ENCODE measurements at regions of chr12 and their contacts with region 1.

Region 1: DNA sequence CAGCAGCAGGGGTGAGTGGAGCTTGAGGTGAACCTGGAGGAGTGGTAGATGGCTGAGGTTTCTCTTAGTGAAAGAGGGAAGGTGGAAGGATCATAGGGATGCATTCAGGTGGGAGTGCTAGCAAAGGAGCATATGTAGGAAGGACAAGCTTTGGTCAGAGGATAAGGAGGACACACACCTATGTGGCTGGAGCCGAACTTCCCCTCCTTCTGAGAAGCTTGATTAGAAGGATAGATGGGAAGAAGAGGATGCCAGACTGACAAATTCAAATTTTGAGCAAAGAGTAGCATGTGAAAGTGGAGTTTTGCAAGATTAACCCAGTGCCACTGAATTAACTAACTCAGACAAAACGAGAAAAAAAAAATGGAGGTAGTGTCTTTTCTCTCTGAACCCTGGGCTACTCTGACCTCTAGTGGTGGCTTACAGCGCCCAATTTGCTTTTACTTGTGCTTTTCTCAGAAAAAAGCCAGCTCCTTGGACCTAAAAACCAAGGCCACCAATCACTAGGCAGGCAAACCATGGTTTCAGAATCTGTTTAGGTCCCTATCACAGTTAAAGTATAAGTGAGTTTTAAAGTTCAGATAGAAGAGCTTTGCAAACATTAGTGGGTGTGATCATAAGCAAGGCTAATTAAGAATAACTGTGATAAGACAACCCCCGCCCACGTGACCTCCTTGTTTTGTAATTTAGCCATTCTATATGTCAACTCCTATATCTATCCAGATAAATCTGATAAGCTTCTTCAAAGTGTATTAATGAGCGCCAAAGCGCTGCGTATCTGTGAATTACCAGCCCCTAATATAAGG is 15.5 kb downstream of the EMP1 start:
- DNase-seq: peak; percentile 70
- H3K4me3 ChIP-seq: no peak overlapping the region
- H3K27ac ChIP-seq: peak overlapping the region; percentile 54
- H3K4me1 ChIP-seq: peaks cover 49% of the 10 kb centered on the region
- H3K27me3 ChIP-seq: no peaks in the 10 kb centered on the region
- CTCF ChIP-seq: peak; percentile 72 to 76
- POLR2A ChIP-seq: no peak

Region 2: GRCh38 chr12:12983420-12984035 is 228.5 kb before region 1 on chr12:
- CTCF ChIA-PET with region 1: interaction called, 159 read pairs
- POLR2A ChIA-PET with region 1: no interaction called
- dilution Hi-C with region 1: loop called (anchors 10 kb)
- intact Hi-C with region 1: no loop called
- DNase-seq: peak; percentile 78
- H3K4me3 ChIP-seq: no peak overlapping the region
- H3K27ac ChIP-seq: peak overlapping the region; percentile 25
- H3K4me1 ChIP-seq: peaks cover 20% of the 10 kb centered on the region
- H3K27me3 ChIP-seq: no peaks in the 10 kb centered on the region
- CTCF ChIP-seq: peak; percentile 56 to 60
- POLR2A ChIP-seq: no peak

Region 3: DNA sequence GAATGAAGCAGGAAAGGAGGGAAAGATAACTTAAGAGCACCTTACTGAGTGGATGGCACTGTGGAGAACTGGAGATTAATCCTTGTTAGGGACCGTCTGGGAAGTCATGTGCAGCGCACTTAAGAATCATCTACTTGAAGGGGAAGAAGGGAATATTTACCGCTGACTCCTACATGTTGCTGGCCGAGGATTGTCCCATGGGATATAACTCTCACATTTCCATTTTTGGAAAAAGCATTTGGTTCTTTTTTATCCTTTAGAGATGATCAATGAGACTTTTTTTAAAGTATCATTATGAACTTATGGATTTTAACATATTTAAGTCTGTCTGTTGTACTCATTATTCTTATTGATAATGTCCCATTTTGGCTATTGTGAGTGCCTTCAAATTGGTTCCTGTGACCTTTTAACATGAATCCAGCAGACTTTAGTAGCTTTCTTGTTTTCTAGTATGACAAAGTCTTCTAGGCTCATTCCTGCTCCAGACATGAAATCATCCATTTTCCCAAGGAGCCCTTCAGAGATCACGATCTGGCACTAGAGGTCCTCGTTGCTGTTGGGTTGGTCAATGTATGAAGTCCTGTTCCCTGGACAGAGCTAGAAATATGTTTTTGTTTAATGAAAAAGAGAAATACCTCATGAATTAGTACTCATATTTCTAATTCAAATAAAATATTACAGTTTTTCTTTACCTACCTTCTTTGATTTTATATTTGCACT is 188.1 kb before region 1 on chr12:
- CTCF ChIA-PET with region 1: interaction called, 5 read pairs
- POLR2A ChIA-PET with region 1: no interaction called
- dilution Hi-C with region 1: no loop called
- intact Hi-C with region 1: loop called (anchors 1 kb)
- DNase-seq: peak; percentile 81
- H3K4me3 ChIP-seq: no peak overlapping the region
- H3K27ac ChIP-seq: no peak overlapping the region
- H3K4me1 ChIP-seq: no peaks in the 10 kb centered on the region
- H3K27me3 ChIP-seq: no peaks in the 10 kb centered on the region
- CTCF ChIP-seq: peak; percentile 55 to 63
- POLR2A ChIP-seq: no peak

Region 4: DNA sequence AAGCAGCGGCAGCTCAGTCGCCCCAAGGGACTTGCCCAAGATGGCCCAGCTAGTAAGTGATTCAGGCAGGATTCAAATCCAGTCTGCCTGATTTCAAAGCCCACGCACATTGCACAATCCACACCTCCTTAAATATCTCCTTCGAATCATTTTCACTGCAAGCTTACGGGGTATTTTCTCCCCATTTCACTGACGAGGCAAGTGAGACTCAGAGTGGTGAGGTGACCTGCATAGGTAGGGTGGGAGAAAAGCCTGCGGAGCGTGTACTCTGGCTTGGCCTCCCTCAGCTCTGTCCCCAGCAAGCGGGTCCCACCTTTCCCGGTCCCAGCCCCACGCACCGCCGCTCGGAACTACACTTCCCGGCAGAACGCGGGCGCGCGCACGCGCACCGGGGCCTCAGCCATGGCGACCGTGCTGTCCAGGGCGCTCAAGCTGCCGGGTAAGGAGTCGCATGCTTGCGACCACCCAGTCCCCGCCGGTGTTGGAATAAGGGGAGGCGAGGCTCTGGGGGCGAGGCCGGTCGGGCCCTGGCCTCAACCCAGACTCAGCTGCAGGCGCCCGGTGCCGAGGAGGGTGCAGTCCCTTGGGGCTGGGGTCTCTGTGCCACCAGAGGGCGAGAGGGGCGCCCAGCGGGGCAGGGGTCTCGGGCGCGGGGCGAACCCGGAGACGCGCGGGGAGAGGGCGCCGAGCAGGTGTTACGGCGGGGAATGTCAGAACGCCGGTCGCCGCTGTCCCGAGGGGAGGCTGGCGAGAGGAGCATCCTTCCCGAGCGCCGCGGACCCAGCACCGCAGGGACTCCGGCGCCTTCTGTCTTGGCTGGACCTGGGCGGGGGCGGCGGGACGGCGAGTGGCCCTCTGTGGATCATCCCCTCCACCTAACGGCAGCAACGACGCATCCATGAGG is 167.8 kb before region 1 on chr12 and contains the start of gene FAM234B:
- CTCF ChIA-PET with region 1: interaction called, 20 read pairs
- POLR2A ChIA-PET with region 1: no interaction called
- dilution Hi-C with region 1: no loop called
- intact Hi-C with region 1: no loop called
- DNase-seq: peak; percentile 70
- H3K4me3 ChIP-seq: peak within 1 kb of the TSS; percentile 66 to 85 (median 79)
- H3K27ac ChIP-seq: no peak within 1 kb of the TSS
- H3K4me1 ChIP-seq: peaks cover 10% of the 10 kb centered on the region
- H3K27me3 ChIP-seq: peaks cover 2% of the 10 kb centered on the region in 2 experiments
- CTCF ChIP-seq: peak; percentile 9 to 21
- POLR2A ChIP-seq: no peak
- total RNA-seq, gene FAM234B: 9.4 and 13.2 TPM in 2 replicates

Region 5: DNA sequence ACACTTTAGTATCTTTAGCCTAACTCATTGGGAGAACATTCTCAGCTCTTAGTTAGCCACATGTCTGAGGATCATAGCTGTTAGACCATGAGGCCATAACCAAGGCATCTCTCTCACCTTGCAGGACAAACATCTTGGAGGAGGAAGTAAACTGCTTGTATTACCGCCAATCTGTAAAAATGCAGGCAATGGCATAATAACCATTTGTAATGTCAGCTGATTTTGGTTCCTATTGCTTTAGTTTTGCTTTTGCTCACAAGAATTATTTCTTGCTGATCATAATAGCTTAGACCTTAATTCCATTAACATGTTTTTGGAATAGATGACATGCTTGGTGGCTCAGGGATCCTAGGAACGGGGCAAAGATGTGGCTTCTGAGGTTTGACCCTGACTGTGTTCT is 92.2 kb before region 1 on chr12:
- CTCF ChIA-PET with region 1: interaction called, 10 read pairs
- POLR2A ChIA-PET with region 1: interaction called, 4 read pairs
- dilution Hi-C with region 1: no loop called
- intact Hi-C with region 1: loop called (anchors 2 kb)
- DNase-seq: no peak
- H3K4me3 ChIP-seq: no peak overlapping the region
- H3K27ac ChIP-seq: no peak overlapping the region
- H3K4me1 ChIP-seq: peaks cover 25% of the 10 kb centered on the region
- H3K27me3 ChIP-seq: no peaks in the 10 kb centered on the region
- CTCF ChIP-seq: no peak
- POLR2A ChIP-seq: no peak

Region 6: GRCh38 chr12:13223179-13223859 is 11.3 kb after region 1 on chr12:
- CTCF ChIA-PET with region 1: interaction called, 13 read pairs
- POLR2A ChIA-PET with region 1: no interaction called
- dilution Hi-C with region 1: no loop called
- intact Hi-C with region 1: no loop called
- DNase-seq: no peak
- H3K4me3 ChIP-seq: no peak overlapping the region
- H3K27ac ChIP-seq: no peak overlapping the region
- H3K4me1 ChIP-seq: no peaks in the 10 kb centered on the region
- H3K27me3 ChIP-seq: no peaks in the 10 kb centered on the region
- CTCF ChIP-seq: no peak
- POLR2A ChIP-seq: no peak

Region 7: DNA sequence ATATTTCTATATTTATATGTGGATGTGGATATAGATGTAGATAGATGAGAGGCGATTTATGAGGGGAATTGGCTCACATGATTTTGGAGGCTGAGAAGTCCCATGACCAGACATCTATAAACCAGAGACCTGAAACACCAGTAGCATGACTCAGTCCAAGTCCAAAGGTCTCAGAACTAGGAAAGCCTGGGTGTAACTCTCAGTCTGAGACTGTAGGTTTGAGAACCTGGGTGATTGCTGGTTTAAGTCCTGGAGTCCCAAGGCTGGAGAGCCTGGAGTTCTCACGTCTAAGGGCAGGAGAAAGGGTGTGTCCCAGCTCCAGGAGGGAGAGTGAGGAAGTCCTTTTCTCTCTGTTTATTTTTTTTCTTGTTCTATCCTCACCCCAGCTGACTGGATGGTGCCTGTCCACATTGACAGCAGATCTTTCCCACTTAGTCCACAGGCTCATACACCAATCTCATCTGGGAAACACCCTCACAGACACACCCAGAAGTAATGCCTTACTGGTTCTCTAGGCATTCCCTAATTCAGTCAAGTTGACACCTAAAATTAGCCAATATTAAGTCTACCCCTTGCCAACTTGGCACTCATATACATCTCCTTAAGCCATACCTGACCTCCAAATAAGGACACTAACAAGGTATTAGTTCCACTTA is 29.9 kb after region 1 on chr12:
- CTCF ChIA-PET with region 1: no interaction called
- POLR2A ChIA-PET with region 1: no interaction called
- dilution Hi-C with region 1: no loop called
- intact Hi-C with region 1: no loop called
- DNase-seq: no peak
- H3K4me3 ChIP-seq: no peak overlapping the region
- H3K27ac ChIP-seq: no peak overlapping the region
- H3K4me1 ChIP-seq: no peaks in the 10 kb centered on the region
- H3K27me3 ChIP-seq: no peaks in the 10 kb centered on the region
- CTCF ChIP-seq: no peak
- POLR2A ChIP-seq: no peak

Measured in endothelial cell of umbilical vein (primary cell).